AG04450 (cell line): ENCODE measurements at regions of chr2 and their contacts with region 1.

Region 1: GRCh38 chr2:27723372-27724144 is 48.0 kb upstream of the MRPL33 start:
- DNase-seq: peak; percentile 46
- H3K4me3 ChIP-seq: no peak overlapping the region
- H3K27ac ChIP-seq: no peak overlapping the region
- H3K27me3 ChIP-seq: no peaks in the 10 kb centered on the region
- CTCF ChIP-seq: peak; percentile 93

Region 2: DNA sequence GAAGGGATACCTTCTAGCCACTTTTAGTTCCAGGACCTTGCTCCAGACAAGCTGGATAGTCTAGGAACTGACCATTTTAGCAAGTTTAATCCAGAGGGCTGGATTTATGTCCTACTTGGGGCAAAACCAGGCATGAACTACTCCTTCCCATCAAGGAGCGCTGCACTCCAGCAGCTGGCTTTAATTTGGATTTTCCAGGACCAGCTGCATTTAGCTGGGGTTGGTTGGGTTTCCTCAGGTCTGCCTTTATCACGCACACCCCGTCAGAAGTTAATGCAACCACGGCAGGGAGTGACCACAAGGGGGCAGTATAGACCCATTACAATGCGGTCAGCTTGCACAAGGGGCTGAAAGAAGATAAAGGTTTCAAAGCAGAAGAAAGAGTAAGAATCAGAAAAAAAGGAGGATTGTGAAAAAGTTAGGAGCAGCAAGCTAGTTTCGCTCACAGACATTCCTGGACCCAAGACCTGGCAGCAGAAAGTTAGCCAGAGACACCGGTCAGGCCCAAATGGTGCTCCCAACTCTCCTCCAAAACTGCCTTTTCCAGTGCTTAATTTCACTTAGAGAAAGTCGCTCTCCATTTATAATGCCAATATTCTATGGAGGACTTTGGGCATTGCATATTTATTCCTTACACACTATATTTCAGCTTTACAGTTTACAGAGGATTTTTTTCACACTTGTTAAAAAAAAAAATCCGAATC is 19.8 kb before region 1 on chr2:
- CTCF ChIA-PET with region 1: interaction called, 14 read pairs
- POLR2A ChIA-PET with region 1: no interaction called
- DNase-seq: peak; percentile 94
- H3K4me3 ChIP-seq: no peak overlapping the region
- H3K27ac ChIP-seq: peak overlapping the region; percentile 61
- H3K27me3 ChIP-seq: no peaks in the 10 kb centered on the region
- CTCF ChIP-seq: peak; percentile 90

Region 3: GRCh38 chr2:27737676-27738348 is 14.3 kb after region 1 on chr2:
- CTCF ChIA-PET with region 1: interaction called, 10 read pairs
- POLR2A ChIA-PET with region 1: interaction called, 3 read pairs
- DNase-seq: peak; percentile 7
- H3K4me3 ChIP-seq: no peak overlapping the region
- H3K27ac ChIP-seq: no peak overlapping the region
- H3K27me3 ChIP-seq: no peaks in the 10 kb centered on the region
- CTCF ChIP-seq: no peak

Region 4: DNA sequence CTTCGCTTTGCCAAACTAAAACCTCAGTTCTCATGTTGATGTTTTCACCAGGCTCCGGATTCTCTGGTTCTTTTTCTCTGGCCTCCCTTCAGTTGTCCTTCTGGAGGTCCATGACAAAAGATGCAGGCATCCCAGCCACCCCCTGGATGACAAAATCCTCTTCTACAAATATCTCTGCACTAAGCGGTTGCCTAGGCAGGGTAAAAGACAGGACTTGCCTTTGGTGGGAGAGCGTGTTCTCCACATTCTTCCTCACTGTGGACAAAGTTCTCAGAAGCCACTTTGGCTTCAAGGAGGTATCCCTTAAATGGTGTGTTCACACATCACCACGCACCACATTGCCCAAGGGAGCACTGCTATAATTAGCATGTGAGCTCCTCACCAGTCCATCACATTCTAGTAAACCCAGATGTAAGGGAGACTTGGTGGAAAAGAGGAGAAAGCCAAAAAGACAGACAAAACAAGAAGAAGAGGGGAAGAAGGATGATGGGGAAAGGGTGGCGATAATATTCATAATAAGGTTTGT is 24.3 kb after region 1 on chr2:
- CTCF ChIA-PET with region 1: interaction called, 11 read pairs
- POLR2A ChIA-PET with region 1: no interaction called
- DNase-seq: no peak
- H3K4me3 ChIP-seq: no peak overlapping the region
- H3K27ac ChIP-seq: no peak overlapping the region
- H3K27me3 ChIP-seq: no peaks in the 10 kb centered on the region
- CTCF ChIP-seq: no peak

Region 5: GRCh38 chr2:27871802-27872201 is 148.2 kb after region 1 on chr2:
- CTCF ChIA-PET with region 1: no interaction called
- POLR2A ChIA-PET with region 1: no interaction called
- DNase-seq: no peak
- H3K4me3 ChIP-seq: no peak overlapping the region
- H3K27ac ChIP-seq: no peak overlapping the region
- H3K27me3 ChIP-seq: no peaks in the 10 kb centered on the region
- CTCF ChIP-seq: no peak

Region 6: DNA sequence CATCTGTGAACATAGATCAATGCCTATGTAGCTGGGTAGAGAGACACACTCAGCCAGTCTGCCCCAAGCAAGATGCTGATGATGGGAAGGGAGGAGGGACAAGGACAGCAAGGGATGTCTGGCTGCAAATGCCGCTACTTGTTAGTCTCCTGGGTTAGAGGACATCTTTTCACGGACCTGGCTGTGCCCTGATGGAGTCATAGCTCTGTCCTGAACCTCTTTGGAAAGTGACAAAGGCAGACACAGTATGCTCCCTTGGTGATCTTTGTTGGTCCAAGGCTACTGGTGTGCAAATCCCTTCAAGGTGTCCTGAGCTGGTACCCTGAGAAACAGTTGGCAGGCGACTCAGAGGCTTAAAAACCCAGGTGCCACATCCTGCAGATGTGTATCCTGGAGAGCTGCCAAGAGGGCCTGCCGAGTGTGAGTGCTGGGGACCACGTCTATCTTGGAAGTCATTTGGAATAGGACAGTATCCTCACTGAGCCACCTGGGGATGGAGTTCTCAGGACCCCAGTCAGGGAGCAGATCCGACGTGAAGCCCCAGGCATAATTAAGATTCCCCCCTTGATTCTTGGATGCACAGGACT is 679.9 kb after region 1 on chr2:
- CTCF ChIA-PET with region 1: interaction called, 10 read pairs
- POLR2A ChIA-PET with region 1: no interaction called
- DNase-seq: no peak
- H3K4me3 ChIP-seq: no peak overlapping the region
- H3K27ac ChIP-seq: no peak overlapping the region
- H3K27me3 ChIP-seq: no peaks in the 10 kb centered on the region
- CTCF ChIP-seq: no peak